Activated B cell treated with CpG ODN at 0.5 μM for 24 hours (primary cell): ENCODE measurements at regions of chr1 and their contacts with region 1.

Region 1: GRCh38 chr1:160098852-160099561 is 588 bp upstream of the IGSF8 start:
- DNase-seq: peak; percentile 98
- ATAC-seq: peak; percentile 90
- H3K4me3 Mint-ChIP-seq: peak overlapping the region; percentile 84
- H3K27ac Mint-ChIP-seq: peak overlapping the region; percentile 85
- H3K4me1 Mint-ChIP-seq: peaks cover 39% of the 10 kb centered on the region
- H3K27me3 Mint-ChIP-seq: no peaks in the 10 kb centered on the region
- CTCF ChIP-seq: no peak

Region 2: GRCh38 chr1:158117854-158118704 is 1980.9 kb before region 1 on chr1:
- CTCF ChIA-PET with region 1: no interaction called
- POLR2A ChIA-PET with region 1: no interaction called
- intact Hi-C with region 1: no loop called
- DNase-seq: peak; percentile 45
- ATAC-seq: peak; percentile 60
- H3K4me3 Mint-ChIP-seq: peak overlapping the region; percentile 64
- H3K27ac Mint-ChIP-seq: no peak overlapping the region
- H3K4me1 Mint-ChIP-seq: peaks cover 27% of the 10 kb centered on the region
- H3K27me3 Mint-ChIP-seq: peaks cover 20% of the 10 kb centered on the region
- CTCF ChIP-seq: no peak

Region 3: DNA sequence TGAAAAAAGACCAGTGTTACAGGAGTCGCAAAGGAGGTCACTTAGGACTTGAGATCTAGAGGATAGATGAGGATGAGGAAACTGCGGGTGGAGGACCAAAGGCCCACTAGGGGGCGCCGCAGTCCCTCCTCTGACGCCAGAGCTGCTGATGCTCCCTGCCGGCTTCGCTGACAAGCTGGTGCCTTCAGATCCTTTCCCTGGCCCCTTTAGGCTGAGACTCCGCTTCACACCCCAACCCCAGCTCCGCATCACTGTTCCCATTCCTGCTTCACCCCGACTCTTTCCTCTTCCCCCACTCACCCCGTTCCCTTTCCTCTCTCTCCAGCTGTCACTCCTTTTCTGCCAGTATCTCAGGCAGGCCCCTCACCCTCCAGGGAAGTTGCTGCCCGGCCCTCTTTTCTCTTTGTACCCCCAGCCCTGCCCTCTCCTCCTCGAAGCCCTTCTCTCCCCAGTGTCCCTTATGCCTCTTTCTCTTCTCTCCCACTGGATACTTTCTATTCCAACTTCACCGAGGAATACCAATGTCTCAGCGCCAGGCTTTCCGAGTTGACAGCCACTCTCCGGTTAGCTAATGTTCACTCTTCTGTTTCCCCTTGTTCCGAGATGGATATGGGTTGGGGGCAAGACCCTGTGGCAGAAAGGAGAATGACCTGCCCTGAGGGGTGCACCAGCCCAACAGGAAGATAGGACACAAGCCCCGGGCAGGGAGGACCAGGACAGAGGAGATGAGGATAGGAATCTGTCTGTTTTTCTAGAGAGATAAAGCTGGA is 13.1 kb before region 1 on chr1:
- CTCF ChIA-PET with region 1: interaction called, 24 read pairs
- POLR2A ChIA-PET with region 1: interaction called, 11 read pairs
- intact Hi-C with region 1: no loop called
- DNase-seq: peak; percentile 60
- ATAC-seq: peak; percentile 68
- H3K4me3 Mint-ChIP-seq: no peak overlapping the region
- H3K27ac Mint-ChIP-seq: no peak overlapping the region
- H3K4me1 Mint-ChIP-seq: peaks cover 14% of the 10 kb centered on the region
- H3K27me3 Mint-ChIP-seq: peaks cover 16% of the 10 kb centered on the region
- CTCF ChIP-seq: no peak

Region 4: DNA sequence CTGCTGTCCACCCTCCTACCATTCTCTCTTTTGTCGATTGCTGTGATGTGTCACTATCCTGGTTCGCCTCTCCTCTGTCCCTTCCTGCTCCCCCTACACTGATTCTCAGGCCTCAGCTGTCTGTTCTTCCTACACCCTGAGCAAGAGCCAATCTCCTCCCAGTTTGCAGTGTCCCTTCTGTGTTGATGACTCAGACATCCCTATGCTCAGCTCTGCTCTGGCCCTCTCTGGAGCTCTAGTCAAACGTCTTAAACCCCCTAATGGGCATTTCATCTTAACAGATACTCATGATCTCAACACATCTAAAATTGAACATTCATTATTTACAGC is 29.2 kb after region 1 on chr1:
- CTCF ChIA-PET with region 1: no interaction called
- POLR2A ChIA-PET with region 1: no interaction called
- intact Hi-C with region 1: no loop called
- DNase-seq: no peak
- ATAC-seq: no peak
- H3K4me3 Mint-ChIP-seq: no peak overlapping the region
- H3K27ac Mint-ChIP-seq: no peak overlapping the region
- H3K4me1 Mint-ChIP-seq: no peaks in the 10 kb centered on the region
- H3K27me3 Mint-ChIP-seq: peaks cover 9% of the 10 kb centered on the region
- CTCF ChIP-seq: no peak

Region 5: DNA sequence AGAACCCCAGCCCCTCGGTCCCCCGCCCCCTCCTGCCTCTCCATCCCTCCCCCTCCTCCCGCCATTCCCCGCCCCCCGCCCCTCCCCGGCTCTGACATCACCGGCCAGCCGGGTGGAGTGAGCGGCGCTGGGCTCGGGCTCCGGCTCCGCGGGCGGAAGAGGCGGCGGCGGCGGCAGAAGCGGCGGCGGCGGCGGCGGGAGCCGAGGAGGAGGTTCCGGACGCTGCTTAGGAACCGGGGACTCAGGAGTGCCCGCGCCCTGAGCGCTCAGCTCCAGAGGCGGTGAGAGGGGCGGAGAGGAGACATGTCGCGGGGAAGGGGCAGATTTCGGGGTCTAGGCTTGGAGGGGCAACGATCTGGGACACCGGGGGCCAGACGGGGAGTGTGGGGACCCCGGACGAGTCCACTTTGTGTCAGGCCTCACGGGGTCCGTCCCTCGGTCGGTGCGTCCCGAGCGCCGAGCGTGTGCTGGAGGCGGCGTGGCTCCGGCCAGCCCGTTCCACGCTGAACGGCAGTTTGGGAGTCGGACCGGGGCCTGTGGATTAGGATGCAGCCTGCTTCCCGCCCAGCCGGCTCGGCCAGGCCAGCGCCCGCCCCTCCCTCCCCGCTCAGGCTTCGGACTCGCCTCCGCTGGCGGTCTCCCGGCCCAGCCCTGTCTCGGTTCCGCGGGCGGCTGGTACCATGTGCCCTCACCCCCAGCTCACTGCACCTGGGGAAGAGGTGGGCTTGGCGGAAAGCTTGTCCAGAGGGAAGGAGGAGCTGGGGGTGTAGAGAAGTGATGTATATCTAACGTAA is 106.4 kb after region 1 on chr1 and contains the start of gene PEA15:
- CTCF ChIA-PET with region 1: no interaction called
- POLR2A ChIA-PET with region 1: interaction called, 10 read pairs
- intact Hi-C with region 1: no loop called
- DNase-seq: peak; percentile 69
- ATAC-seq: peak; percentile 51
- H3K4me3 Mint-ChIP-seq: peak within 1 kb of the TSS; percentile 85
- H3K27ac Mint-ChIP-seq: peak within 1 kb of the TSS; percentile 95
- H3K4me1 Mint-ChIP-seq: peaks cover 67% of the 10 kb centered on the region
- H3K27me3 Mint-ChIP-seq: no peaks in the 10 kb centered on the region
- CTCF ChIP-seq: no peak
- total RNA-seq, gene PEA15: 107 and 111 TPM in 2 replicates

Region 6: DNA sequence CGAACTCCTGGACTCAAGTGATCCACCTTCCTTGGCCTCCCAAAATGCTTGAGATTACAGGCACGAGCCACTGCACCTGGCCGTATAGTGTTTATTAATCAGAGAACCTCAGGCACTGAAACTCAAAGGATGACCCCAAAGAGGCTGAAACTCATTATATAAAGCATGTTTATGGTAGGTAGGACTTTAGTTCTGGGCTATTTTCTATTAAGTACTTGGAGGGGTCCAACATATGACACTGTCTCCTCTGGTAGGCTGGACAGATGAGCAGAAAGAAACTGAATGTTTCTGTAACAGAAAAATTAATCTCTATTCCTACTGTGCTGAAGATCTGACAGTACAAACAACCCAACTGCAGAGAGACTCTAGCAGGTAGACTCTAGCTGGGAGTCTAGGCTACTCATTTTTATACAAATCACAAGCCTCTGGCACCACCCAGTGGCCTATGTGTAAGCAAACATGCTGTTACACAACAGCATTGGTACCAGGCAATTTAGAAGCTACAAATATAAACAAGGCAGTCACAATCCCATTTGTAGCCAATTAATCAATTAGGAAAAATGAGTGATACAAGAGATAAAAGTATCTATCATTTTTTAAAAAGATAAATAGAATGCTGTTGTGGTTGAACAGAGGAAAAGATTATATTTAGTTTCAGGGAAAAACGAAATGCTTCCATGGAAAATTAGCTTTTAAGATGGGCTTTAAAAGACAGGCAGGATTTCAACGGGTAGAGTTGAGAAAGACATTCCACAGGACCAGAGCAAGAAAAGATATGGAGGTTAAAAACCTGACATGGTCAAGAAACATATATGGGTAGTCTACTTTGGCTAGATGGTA is 152.9 kb after region 1 on chr1:
- CTCF ChIA-PET with region 1: interaction called, 99 read pairs
- POLR2A ChIA-PET with region 1: interaction called, 4 read pairs
- intact Hi-C with region 1: loop called (anchors 1 kb)
- DNase-seq: no peak
- ATAC-seq: peak; percentile 98
- H3K4me3 Mint-ChIP-seq: no peak overlapping the region
- H3K27ac Mint-ChIP-seq: peak overlapping the region; percentile 50
- H3K4me1 Mint-ChIP-seq: peaks cover 8% of the 10 kb centered on the region
- H3K27me3 Mint-ChIP-seq: no peaks in the 10 kb centered on the region
- CTCF ChIP-seq: peak; percentile 36

Region 7: GRCh38 chr1:160607011-160607671 is 508.1 kb after region 1 on chr1:
- CTCF ChIA-PET with region 1: no interaction called
- POLR2A ChIA-PET with region 1: no interaction called
- intact Hi-C with region 1: loop called (anchors 1 kb)
- DNase-seq: no peak
- ATAC-seq: peak; percentile 94
- H3K4me3 Mint-ChIP-seq: peak overlapping the region; percentile 42
- H3K27ac Mint-ChIP-seq: peak overlapping the region; percentile 84
- H3K4me1 Mint-ChIP-seq: peaks cover 33% of the 10 kb centered on the region
- H3K27me3 Mint-ChIP-seq: no peaks in the 10 kb centered on the region
- CTCF ChIP-seq: no peak